ENCODE measurements at regions of chr20 and their contacts with region 1.

Region 1: DNA sequence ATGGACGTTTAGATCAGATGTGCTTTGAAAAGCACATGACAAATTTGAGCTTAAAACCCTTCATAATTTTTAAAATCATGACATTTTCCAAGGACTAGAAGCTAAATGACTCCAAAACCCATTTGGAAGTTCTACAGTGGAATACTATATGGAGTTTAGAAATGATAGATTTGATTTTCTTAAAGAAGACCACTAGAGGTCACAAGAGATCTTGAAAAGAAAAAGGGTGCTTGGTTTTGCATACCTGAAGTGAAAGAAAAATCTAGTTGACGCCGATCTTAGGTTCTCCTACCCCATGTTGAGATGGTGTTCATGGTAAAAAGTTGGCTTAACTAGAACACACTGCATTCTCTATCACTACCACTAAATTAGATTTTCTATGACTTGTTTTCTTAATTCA is 31.5 kb downstream of the CFAP61 start:
- DNase-seq: no peak
- H3K4me3 ChIP-seq: no peak overlapping the region
- H3K27ac ChIP-seq: no peak overlapping the region
- H3K4me1 ChIP-seq: no peaks in the 10 kb centered on the region
- H3K27me3 ChIP-seq: no peaks in the 10 kb centered on the region
- CTCF ChIP-seq: peak in 3 of 4 experiments; percentile 37 to 63 (median 55)
- POLR2A ChIP-seq: no peak

Region 2: DNA sequence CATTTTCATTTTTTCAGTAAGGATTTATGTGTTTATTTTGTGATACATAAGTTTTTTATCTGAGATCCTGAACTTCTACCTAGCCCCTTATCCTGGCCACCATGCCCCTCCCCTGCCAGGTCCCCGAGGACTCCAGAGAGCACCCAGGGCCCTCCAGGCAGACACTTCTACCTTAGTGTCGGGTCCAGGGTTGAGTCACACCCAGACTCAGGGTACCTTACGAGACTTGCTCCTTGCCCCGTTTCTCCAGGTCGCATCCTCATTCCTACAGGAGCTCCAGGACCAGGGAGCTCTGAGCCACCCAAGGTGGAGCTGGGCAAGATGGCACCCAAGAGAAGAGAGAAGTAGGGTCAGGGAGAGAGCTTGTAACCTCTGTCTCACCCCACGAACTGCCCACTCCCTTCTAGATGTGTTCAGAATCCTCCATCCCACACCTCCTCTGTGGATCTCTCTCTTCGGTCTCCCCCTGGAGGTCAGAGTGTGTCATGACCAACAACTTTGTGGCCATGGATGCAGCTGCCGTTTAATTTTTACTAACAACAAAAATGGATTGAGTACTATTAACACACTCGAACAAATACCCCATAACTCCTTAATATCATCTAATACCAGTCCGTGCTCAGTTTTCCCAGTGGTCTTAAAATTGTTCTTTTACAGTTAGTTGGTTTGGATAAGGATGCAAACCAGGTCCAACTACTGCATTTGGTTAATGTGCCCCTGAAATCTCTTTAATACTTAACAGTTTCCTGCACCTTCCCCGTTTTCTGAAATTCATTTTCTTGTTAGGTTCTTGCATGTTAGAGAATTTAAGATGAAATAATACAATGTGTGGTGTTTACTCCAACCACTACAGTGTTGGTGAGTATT is 153.5 kb after region 1 on chr20:
- intact Hi-C with region 1: loop called (anchors 5 kb)
- DNase-seq: peak; percentile 30
- H3K4me3 ChIP-seq: no peak overlapping the region
- H3K27ac ChIP-seq: no peak overlapping the region
- H3K4me1 ChIP-seq: no peaks in the 10 kb centered on the region
- H3K27me3 ChIP-seq: no peaks in the 10 kb centered on the region
- CTCF ChIP-seq: peak; percentile 33 to 66 (median 62)
- POLR2A ChIP-seq: no peak

Region 3: DNA sequence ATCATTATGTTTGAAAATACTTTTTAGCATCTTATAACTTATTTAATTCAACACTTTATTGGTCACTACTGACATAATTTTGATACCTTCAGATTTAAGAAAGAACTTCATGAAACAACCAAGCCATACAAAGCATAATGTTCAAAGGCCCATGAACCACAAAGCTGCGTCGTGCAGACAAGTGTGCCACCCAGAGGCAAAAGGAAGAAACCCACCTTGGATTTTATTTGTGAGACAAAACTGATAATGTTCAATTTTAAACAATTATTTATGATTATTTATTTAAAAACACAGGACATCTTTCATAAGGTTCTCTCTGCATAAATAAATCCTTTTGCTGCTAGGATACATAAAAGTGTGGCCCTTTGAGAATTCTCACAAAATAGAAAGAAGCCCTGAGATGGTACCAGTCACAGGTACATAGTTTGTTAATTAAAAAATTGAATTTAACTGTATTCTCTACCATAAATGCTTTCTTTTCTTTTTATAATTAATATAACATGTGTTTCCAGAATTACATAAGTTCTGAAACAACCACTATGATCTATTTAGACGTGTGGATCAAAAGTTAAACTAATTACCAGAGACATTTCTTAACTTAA is 484.9 kb after region 1 on chr20:
- intact Hi-C with region 1: loop called (anchors 5 kb)
- DNase-seq: no peak
- H3K4me3 ChIP-seq: no peak overlapping the region
- H3K27ac ChIP-seq: no peak overlapping the region
- H3K4me1 ChIP-seq: no peaks in the 10 kb centered on the region
- H3K27me3 ChIP-seq: no peaks in the 10 kb centered on the region
- CTCF ChIP-seq: peak; percentile 13 to 63 (median 49)
- POLR2A ChIP-seq: no peak